Activated CD8-positive, alpha-beta memory T cell treated with anti-CD3 and anti-CD28 coated beads, Interleukin-2, amount 10 ng/mL, durations not matched to agents 7 days and 5 days (primary cell): ENCODE measurements at regions of chr16 and their contacts with region 1.

Region 1: DNA sequence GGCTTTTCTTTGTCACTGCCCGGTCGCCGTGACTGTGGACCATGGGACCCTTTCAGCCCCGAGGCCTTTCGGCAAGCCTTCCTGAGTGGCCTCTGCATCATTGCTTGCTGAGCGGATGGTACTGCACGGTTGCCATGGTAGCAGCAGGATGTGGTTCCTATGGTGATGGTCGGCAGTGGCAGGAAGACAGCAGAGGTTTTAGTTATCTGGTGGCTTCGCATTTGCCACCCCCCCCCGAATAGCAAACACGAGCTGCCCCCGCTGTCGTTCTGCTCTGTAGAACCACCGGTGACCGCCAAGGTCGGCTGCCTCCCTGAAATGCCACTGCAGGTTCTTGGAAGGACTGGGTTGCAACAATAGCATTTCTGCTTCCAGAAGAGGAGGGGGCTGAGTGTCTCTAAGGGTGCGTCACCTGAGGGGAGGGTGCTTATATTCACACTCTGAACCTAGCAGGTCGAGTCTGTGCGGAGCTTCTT is 76.6 kb downstream of the CMIP start:
- DNase-seq: peak; percentile 97
- ATAC-seq: peak; percentile 63
- H3K4me3 Mint-ChIP-seq: peak overlapping the region; percentile 58
- H3K27ac Mint-ChIP-seq: peak overlapping the region; percentile 95
- H3K4me1 Mint-ChIP-seq: peaks cover 78% of the 10 kb centered on the region
- H3K27me3 Mint-ChIP-seq: no peaks in the 10 kb centered on the region

Region 2: GRCh38 chr16:81469710-81470535 is 51.3 kb before region 1 on chr16:
- CTCF ChIA-PET with region 1: interaction called, 10 read pairs
- DNase-seq: peak; percentile 72
- ATAC-seq: peak; percentile 96
- H3K4me3 Mint-ChIP-seq: peak overlapping the region; percentile 67
- H3K27ac Mint-ChIP-seq: peak overlapping the region; percentile 84
- H3K4me1 Mint-ChIP-seq: peaks cover 76% of the 10 kb centered on the region
- H3K27me3 Mint-ChIP-seq: no peaks in the 10 kb centered on the region

Region 3: DNA sequence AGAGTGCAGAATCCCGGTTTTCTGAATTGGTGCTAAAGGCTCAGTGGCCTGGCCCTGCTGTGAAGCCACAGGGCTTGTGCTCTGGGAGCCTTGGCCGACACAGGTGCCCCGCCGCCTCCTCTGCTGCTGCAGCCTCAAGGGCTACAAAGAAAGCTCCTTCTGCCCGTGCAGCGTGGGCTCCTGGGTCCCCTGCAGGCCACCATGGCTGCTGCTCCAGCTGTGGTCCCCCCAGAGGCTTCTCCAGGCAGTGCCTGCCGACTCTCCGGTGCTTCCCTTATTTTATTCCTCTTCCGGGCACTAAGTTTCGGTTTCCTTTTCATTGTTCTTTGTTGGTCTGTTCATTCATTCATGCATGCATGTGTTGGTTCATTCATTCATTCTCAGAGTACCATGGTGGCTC is 23.5 kb before region 1 on chr16:
- CTCF ChIA-PET with region 1: no interaction called
- DNase-seq: no peak
- ATAC-seq: no peak
- H3K4me3 Mint-ChIP-seq: no peak overlapping the region
- H3K27ac Mint-ChIP-seq: peak overlapping the region; percentile 5
- H3K4me1 Mint-ChIP-seq: peaks cover 27% of the 10 kb centered on the region
- H3K27me3 Mint-ChIP-seq: no peaks in the 10 kb centered on the region